ENCODE measurements at regions of chr11 and their contacts with region 1.

Region 1: GRCh38 chr11:10808553-10809372 is at the start of gene EIF4G2:
- DNase-seq: peak; percentile 96
- ATAC-seq: peak; percentile 91
- H3K4me3 Mint-ChIP-seq: peak within 1 kb of the TSS; percentile 97
- H3K27ac Mint-ChIP-seq: peak within 1 kb of the TSS; percentile 99
- H3K4me1 Mint-ChIP-seq: peaks cover 42% of the 10 kb centered on the region
- H3K27me3 Mint-ChIP-seq: no peaks in the 10 kb centered on the region
- CTCF ChIP-seq: no peak
- total RNA-seq, gene EIF4G2: 675 and 769 TPM in 2 replicates

Region 2: DNA sequence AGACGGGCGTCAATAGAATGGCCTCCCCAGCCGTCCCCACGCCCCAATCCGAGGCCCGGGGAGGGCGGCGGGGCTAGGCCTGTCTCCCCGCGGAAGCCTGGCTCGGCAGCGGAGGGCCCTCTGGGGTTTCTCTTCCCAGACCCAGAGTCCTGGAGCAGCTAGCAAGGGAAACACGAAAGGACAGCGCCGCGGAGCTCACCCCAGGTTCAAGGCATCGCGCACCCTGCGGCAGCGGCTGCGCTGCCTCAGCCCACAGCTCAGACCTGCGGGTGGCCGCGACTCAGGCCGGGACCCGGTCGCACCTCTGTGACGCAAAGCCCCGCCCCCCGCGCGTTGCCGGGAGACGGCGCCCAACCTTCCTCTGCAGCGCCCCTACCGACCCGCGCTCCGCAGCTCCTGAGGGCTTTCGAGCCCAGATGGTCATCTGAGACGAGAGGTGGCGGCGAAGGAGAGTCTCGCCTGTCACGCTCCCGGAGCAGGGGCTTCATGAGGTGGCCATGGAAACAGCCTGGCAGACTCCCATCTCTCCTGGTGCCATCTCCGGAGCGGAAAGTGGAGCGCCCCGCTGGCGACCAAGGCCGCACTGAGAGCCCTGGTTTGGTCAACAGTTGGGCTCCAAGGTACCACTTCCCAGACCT is 267.7 kb before region 1 on chr11 and contains the start of gene RNF141:
- CTCF ChIA-PET with region 1: no interaction called
- POLR2A ChIA-PET with region 1: interaction called, 11 read pairs
- intact Hi-C with region 1: no loop called
- DNase-seq: peak; percentile 99
- ATAC-seq: peak; percentile 91
- H3K4me3 Mint-ChIP-seq: peak within 1 kb of the TSS; percentile 90
- H3K27ac Mint-ChIP-seq: peak within 1 kb of the TSS; percentile 95
- H3K4me1 Mint-ChIP-seq: peaks cover 80% of the 10 kb centered on the region
- H3K27me3 Mint-ChIP-seq: no peaks in the 10 kb centered on the region
- CTCF ChIP-seq: no peak
- total RNA-seq, gene RNF141: 32.8 and 36.9 TPM in 2 replicates

Region 3: GRCh38 chr11:10693509-10694081 is 115.2 kb before region 1 on chr11 and contains the start of gene IRAG1:
- CTCF ChIA-PET with region 1: no interaction called
- POLR2A ChIA-PET with region 1: no interaction called
- intact Hi-C with region 1: no loop called
- DNase-seq: no peak
- ATAC-seq: no peak
- H3K4me3 Mint-ChIP-seq: no peak within 1 kb of the TSS
- H3K27ac Mint-ChIP-seq: no peak within 1 kb of the TSS
- H3K4me1 Mint-ChIP-seq: peaks cover 18% of the 10 kb centered on the region
- H3K27me3 Mint-ChIP-seq: no peaks in the 10 kb centered on the region
- CTCF ChIP-seq: no peak
- total RNA-seq, gene IRAG1: not detected in 2 replicates

Region 4: GRCh38 chr11:10735481-10736475 is 73.0 kb before region 1 on chr11:
- CTCF ChIA-PET with region 1: no interaction called
- POLR2A ChIA-PET with region 1: no interaction called
- intact Hi-C with region 1: no loop called
- DNase-seq: peak; percentile 93
- ATAC-seq: peak; percentile 100
- H3K4me3 Mint-ChIP-seq: peak overlapping the region; percentile 77
- H3K27ac Mint-ChIP-seq: peak overlapping the region; percentile 83
- H3K4me1 Mint-ChIP-seq: peaks cover 13% of the 10 kb centered on the region
- H3K27me3 Mint-ChIP-seq: no peaks in the 10 kb centered on the region
- CTCF ChIP-seq: peak; percentile 65

Region 5: GRCh38 chr11:10770626-10771254 is 38.0 kb before region 1 on chr11:
- CTCF ChIA-PET with region 1: interaction called, 7 read pairs
- POLR2A ChIA-PET with region 1: interaction called, 20 read pairs
- intact Hi-C with region 1: no loop called
- DNase-seq: no peak
- ATAC-seq: peak; percentile 28
- H3K4me3 Mint-ChIP-seq: no peak overlapping the region
- H3K27ac Mint-ChIP-seq: no peak overlapping the region
- H3K4me1 Mint-ChIP-seq: peaks cover 3% of the 10 kb centered on the region
- H3K27me3 Mint-ChIP-seq: no peaks in the 10 kb centered on the region
- CTCF ChIP-seq: no peak

Region 6: DNA sequence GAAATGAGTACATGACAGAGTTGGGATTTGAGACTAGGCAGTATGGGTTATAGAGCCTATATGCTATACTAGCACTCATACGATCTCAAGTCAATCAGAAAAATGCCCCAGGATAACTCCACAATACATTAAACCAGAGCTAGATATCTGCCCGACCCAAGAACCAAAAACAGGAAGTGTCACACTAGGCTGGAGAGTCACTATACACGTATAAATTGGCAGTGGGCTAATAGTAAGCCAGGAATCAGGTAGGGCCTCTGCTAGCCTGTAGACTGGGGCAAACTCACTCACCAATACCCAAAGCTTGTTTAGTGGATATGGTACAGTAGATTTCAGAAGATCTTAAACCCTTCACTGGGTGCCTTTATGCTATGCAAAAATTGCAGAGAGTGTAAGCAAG is 16.1 kb after region 1 on chr11:
- CTCF ChIA-PET with region 1: interaction called, 5 read pairs
- POLR2A ChIA-PET with region 1: interaction called, 102 read pairs
- intact Hi-C with region 1: loop called (anchors 1 kb)
- DNase-seq: no peak
- ATAC-seq: peak; percentile 99
- H3K4me3 Mint-ChIP-seq: peak overlapping the region; percentile 63
- H3K27ac Mint-ChIP-seq: peak overlapping the region; percentile 90
- H3K4me1 Mint-ChIP-seq: peaks cover 32% of the 10 kb centered on the region
- H3K27me3 Mint-ChIP-seq: no peaks in the 10 kb centered on the region
- CTCF ChIP-seq: no peak

Region 7: GRCh38 chr11:10857709-10858438 is 49.1 kb after region 1 on chr11 and contains the start of gene ZBED5:
- CTCF ChIA-PET with region 1: interaction called, 7 read pairs
- POLR2A ChIA-PET with region 1: interaction called, 470 read pairs
- intact Hi-C with region 1: loop called (anchors 1 kb)
- DNase-seq: peak; percentile 93
- ATAC-seq: peak; percentile 89
- H3K4me3 Mint-ChIP-seq: peak within 1 kb of the TSS; percentile 100
- H3K27ac Mint-ChIP-seq: peak within 1 kb of the TSS; percentile 100
- H3K4me1 Mint-ChIP-seq: peaks cover 48% of the 10 kb centered on the region
- H3K27me3 Mint-ChIP-seq: no peaks in the 10 kb centered on the region
- CTCF ChIP-seq: no peak
- total RNA-seq, gene ZBED5: 111 and 116 TPM in 2 replicates

Region 8: DNA sequence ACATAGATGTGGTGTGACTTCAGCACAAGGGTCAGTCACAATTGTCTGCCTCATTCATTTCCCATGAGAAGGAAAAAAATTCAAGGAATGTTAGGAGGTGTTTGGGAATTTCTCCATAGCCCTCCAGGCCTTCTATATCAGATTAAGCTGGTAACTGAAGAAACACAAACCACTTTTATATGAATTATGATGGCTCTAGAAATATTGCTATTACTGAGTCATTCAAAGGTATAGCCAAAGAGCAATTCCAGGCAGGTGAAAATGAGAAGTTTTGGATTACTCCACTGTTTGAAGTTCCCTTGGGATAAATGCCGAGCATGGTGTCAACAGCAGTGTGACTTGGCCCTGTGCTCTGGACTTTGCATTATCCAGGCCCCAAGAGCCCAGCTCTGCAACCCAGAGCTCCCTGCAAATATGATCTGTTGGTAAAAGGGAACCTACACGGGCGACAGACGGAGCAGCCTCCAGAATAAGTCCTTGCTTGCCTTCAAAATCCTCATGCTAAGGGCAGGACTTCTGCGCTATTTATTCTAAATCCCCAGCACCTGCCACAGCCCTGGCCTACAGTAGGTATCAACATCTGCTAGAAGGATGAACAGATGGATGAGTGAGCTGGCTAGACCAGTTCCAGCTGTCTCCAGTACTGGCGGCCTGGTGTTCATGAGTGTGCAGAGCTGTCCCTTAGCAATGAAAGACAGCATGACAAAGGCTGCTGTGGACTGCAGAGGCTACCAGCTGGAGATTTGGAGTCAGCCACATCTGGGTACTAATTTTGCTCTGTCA is 116.6 kb after region 1 on chr11:
- CTCF ChIA-PET with region 1: no interaction called
- POLR2A ChIA-PET with region 1: interaction called, 21 read pairs
- intact Hi-C with region 1: no loop called
- DNase-seq: no peak
- ATAC-seq: no peak
- H3K4me3 Mint-ChIP-seq: no peak overlapping the region
- H3K27ac Mint-ChIP-seq: no peak overlapping the region
- H3K4me1 Mint-ChIP-seq: peaks cover 2% of the 10 kb centered on the region
- H3K27me3 Mint-ChIP-seq: peaks cover 11% of the 10 kb centered on the region
- CTCF ChIP-seq: no peak

Region 9: GRCh38 chr11:11841723-11842420 is 1033.1 kb after region 1 on chr11 and contains the start of gene USP47:
- CTCF ChIA-PET with region 1: no interaction called
- POLR2A ChIA-PET with region 1: interaction called, 32 read pairs
- intact Hi-C with region 1: no loop called
- DNase-seq: peak; percentile 94
- ATAC-seq: peak; percentile 81
- H3K4me3 Mint-ChIP-seq: no peak within 1 kb of the TSS
- H3K27ac Mint-ChIP-seq: no peak within 1 kb of the TSS
- H3K4me1 Mint-ChIP-seq: peaks cover 27% of the 10 kb centered on the region
- H3K27me3 Mint-ChIP-seq: peaks cover 3% of the 10 kb centered on the region
- CTCF ChIP-seq: no peak
- total RNA-seq, gene USP47: 48.5 and 50.3 TPM in 2 replicates

Measured in activated B cell treated with CpG ODN at 0.5 μM for 24 hours (primary cell).